ENCODE measurements at regions of chr22 and their contacts with region 1.

Region 1: DNA sequence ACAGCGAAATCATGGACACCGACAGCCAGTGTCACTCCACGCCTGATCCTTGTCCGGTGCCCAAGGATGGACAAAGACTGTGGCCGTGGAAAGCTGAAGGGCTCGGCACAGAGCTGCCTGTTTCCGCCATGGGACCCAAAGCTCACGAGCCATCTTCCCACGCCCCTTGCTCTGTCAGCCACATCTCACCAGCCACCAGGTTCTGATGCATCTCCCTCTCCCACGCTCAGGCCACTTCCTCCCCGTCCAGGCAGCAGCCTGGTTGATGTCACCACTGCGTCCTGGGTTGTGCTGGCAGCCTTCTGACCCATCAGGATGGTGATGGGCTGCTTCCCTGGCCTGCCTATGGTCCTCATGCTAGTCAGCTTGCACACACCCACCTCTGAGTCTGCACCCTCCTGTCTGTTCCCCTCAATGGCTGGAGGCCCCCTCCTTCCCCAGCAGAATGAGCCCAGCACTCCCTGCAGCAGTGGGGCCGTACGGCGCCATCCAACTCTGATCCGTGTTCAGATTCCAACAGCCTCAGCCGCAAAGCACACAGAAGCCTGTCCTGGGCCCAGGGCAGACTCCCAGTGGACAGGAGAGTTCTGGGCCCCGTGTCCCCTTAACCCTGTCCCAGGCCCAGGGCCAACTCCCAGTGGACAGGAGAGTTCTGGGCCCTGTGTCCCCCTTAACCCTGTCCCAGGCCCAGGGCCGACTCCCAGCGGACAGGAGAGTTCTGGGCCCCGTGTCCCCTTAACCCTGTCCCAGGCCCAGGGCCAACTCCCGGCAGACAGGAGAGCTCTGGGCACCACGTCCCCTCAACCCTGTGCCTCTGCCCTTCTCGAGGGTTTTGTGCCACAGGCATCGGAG is 259.5 kb downstream of the BRD1 start:
- DNase-seq: no peak
- ATAC-seq: 0 out of 2 replicates have a peak, but pooled peaks have one; percentile 38
- H3K4me3 ChIP-seq: no peak overlapping the region
- H3K27ac ChIP-seq: no peak overlapping the region
- H3K4me1 ChIP-seq: no peaks in the 10 kb centered on the region
- H3K27me3 ChIP-seq: no peaks in the 10 kb centered on the region
- CTCF ChIP-seq: no peak

Region 2: GRCh38 chr22:49372530-49373288 is 195.4 kb before region 1 on chr22:
- CTCF ChIA-PET with region 1: no interaction called
- POLR2A ChIA-PET with region 1: no interaction called
- in situ Hi-C with region 1: no loop called
- intact Hi-C with region 1: no loop called
- DNase-seq: no peak
- ATAC-seq: peak; percentile 79
- H3K4me3 ChIP-seq: no peak overlapping the region
- H3K27ac ChIP-seq: no peak overlapping the region
- H3K4me1 ChIP-seq: no peaks in the 10 kb centered on the region; the same call in 1 of the 2 replicates
- H3K27me3 ChIP-seq: no peaks in the 10 kb centered on the region
- CTCF ChIP-seq: no peak

Region 3: DNA sequence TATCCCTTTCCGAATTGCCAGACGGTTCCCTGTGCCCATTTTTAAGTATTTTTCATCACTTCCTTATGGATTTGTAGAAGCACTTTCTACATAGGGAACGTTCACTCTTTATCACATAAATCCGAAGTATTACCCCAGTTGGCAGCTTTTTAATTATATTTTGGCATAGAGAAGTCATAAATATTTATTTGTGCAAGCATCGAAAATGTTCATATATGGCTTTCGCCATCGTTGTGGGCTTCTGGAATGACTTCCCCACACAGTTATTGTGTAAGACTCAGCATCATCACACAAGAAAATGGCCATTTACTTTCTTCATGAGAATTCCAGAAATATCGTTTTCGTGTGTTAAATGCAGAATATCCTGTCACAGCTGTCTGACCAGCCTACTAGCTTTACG is 120.8 kb before region 1 on chr22:
- CTCF ChIA-PET with region 1: no interaction called
- POLR2A ChIA-PET with region 1: interaction called, 13 read pairs
- in situ Hi-C with region 1: no loop called
- intact Hi-C with region 1: no loop called
- DNase-seq: no peak
- ATAC-seq: no peak
- H3K4me3 ChIP-seq: no peak overlapping the region
- H3K27ac ChIP-seq: no peak overlapping the region
- H3K4me1 ChIP-seq: no peaks in the 10 kb centered on the region
- H3K27me3 ChIP-seq: no peaks in the 10 kb centered on the region; the same call in 1 of the 2 replicates
- CTCF ChIP-seq: no peak

Region 4: GRCh38 chr22:49582181-49582580 is 14.1 kb after region 1 on chr22:
- CTCF ChIA-PET with region 1: no interaction called
- POLR2A ChIA-PET with region 1: no interaction called
- in situ Hi-C with region 1: no loop called
- intact Hi-C with region 1: no loop called
- DNase-seq: no peak
- ATAC-seq: no peak
- H3K4me3 ChIP-seq: no peak overlapping the region
- H3K27ac ChIP-seq: no peak overlapping the region
- H3K4me1 ChIP-seq: no peaks in the 10 kb centered on the region
- H3K27me3 ChIP-seq: no peaks in the 10 kb centered on the region
- CTCF ChIP-seq: no peak

Measured in Panc1 (cell line).